Dorsolateral prefrontal cortex (tissue), 120 donors: ENCODE measurements at regions of chr17 and their contacts with region 1.

Region 1: DNA sequence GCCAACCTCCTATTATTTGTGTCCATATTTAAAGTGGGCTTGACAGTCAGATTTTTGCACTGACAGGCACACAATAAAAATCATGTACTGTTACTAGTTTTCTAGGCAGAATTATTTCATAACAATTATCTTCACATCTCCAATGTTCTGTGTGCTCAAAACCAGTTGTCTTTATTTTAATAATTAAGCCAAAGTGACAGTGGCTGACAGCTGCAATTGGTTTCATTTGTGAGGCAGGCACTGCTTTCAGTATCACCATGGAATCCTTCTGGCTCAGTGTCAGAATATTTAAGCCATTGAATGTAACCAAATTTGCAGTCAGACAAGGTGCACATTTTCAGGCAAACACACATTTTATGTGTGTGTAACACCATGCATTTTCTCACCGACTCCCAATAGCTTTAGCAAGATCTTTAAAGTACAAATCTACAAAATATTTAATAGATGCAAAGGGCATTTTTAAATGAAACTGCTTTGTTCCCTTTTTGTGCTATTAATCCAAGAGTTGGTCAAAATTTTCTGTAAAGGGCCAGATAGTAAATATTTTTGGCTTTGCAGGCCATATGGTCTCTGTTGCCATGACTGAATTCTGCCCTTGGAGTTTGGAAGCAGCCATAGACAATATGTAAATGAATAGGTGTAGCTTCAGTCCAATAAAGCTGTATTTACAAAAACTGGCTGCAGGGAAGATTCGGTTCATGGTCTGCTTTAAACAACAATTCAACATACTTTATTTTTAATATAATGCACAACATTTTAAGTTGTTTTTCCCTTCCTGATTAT is 486.0 kb downstream of the KCNJ2 start:
- DNase-seq: no peak
- H3K4me3 ChIP-seq: peak overlapping the region in 37 of 59 donors; percentile 3 to 45 (median 19)
- H3K27ac ChIP-seq: peak overlapping the region in 58 of 59 donors; percentile 12 to 94 (median 80)
- H3K27me3 ChIP-seq: no peaks in the 10 kb centered on the region
- CTCF ChIP-seq: no peak

Region 2: GRCh38 chr17:70622368-70623260 is 32.8 kb before region 1 on chr17:
- intact Hi-C with region 1: no loop called
- DNase-seq: peak; percentile 14 to 87 (median 76)
- H3K4me3 ChIP-seq: peak overlapping the region in 36 of 59 donors; percentile 1 to 53 (median 24)
- H3K27ac ChIP-seq: peak overlapping the region; percentile 2 to 93 (median 84)
- H3K27me3 ChIP-seq: no peaks in the 10 kb centered on the region
- CTCF ChIP-seq: peak; percentile 43 to 95 (median 79)

Region 3: DNA sequence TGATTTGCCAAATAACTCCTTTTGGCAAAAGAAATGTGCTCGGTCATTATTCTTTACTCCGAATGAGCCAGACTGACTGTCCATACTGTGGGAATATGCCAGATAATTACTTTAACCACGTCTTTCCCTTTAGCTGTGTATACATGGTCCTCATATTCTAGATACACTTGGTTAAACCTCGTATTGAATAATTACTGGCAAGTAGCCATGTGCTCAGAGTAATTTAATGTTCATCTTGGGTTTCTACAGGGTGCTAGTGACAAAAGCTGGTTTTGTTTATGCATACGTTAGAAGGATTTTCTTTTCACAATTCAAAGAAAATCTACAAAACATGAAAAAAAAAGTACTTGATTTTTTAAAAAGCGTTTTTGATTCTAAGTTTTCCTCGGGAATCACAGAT is 54.2 kb after region 1 on chr17:
- intact Hi-C with region 1: loop called in 1 of 2 experiments (anchors 10 kb)
- DNase-seq: no peak
- H3K4me3 ChIP-seq: peak overlapping the region in 10 of 59 donors; percentile 4 to 36 (median 14)
- H3K27ac ChIP-seq: no peak overlapping the region
- H3K27me3 ChIP-seq: peaks cover 0 to 9% (median 0%) of the 10 kb centered on the region in 45 donors
- CTCF ChIP-seq: no peak